Activated CD8-positive, alpha-beta T cell treated with anti-CD3 and anti-CD28 coated beads, Interleukin-2, amount 10 ng/mL, durations not matched to agents 7 days and 5 days (primary cell): ENCODE measurements at regions of chr5 and their contacts with region 1.

Region 1: GRCh38 chr5:54492178-54492577 is 25.4 kb upstream of the SNX18 start:
- DNase-seq: no peak
- ATAC-seq: no peak
- H3K4me3 Mint-ChIP-seq: no peak overlapping the region
- H3K27ac Mint-ChIP-seq: no peak overlapping the region
- H3K4me1 Mint-ChIP-seq: no peaks in the 10 kb centered on the region
- H3K27me3 Mint-ChIP-seq: peaks cover 13% of the 10 kb centered on the region

Region 2: DNA sequence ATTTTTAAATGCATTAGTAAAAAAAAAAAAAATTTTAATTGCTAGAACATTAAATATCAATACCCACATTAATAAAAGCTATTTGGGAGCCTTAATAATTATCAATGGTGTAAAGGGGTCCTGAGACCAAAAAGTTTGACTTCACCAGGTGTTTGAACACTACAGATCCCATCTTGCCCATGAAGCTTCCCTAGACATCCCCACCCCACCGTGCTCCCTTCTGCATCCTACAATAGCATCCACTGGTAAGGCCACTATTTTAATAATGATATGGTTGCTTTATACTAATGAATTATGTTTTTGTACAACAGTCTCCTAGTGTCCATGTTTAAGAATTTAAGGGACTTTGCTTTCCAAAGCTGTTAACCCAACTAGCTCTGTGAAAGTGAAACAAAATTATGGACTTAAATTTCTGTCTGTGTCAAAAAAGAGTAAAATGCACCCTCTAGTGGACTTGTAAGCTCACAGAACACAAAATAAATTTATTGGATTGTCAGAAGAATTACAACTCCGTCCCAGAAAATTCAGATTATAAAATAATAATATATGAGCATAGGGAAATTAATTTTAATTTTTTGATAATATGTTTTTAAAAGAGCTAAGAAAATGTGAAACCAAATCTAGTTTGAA is 257.8 kb before region 1 on chr5:
- CTCF ChIA-PET with region 1: interaction called, 12 read pairs
- POLR2A ChIA-PET with region 1: no interaction called
- DNase-seq: no peak
- ATAC-seq: no peak
- H3K4me3 Mint-ChIP-seq: peak overlapping the region; percentile 32
- H3K27ac Mint-ChIP-seq: no peak overlapping the region
- H3K4me1 Mint-ChIP-seq: peaks cover 3% of the 10 kb centered on the region
- H3K27me3 Mint-ChIP-seq: no peaks in the 10 kb centered on the region

Region 3: DNA sequence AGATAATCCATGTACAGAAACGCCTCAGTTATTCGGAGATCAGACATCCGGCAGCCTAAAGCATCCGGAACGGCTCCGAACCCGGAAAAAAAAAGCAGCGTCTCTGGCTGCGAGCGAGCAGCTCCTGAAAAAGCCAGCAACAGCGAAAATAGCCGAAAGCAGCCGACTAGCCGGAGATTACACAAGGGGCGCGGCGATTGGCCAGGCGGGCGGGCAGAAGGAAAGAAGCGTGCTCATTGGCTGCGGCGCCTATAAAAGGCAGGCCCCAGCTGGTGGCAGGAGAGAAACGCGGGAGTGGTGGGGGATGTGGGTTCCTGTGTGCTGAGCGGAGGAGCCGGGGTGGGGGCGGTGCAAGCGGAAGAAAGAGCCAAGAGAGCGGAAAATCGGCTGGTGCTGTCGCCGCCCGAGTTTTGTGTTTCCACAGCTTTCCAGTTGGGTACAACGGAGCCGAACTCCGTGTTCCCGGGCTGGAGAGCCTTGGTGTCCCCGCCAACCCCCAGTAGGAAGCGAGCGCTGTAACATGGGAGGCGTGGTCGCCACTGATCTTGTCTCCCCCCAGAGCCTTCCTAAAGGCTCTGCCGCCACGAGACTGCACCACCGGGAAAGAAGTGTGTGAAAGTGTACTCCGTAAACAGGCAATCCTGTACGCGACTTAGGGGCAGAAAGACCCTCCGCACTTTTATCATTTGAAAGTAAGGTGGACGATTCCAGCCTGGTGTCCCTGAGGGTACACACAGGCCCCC is 181.6 kb before region 1 on chr5 and contains the start of gene ARL15:
- CTCF ChIA-PET with region 1: interaction called, 25 read pairs
- POLR2A ChIA-PET with region 1: no interaction called
- DNase-seq: peak; percentile 99
- ATAC-seq: peak; percentile 94
- H3K4me3 Mint-ChIP-seq: peak within 1 kb of the TSS; percentile 91
- H3K27ac Mint-ChIP-seq: peak within 1 kb of the TSS; percentile 92
- H3K4me1 Mint-ChIP-seq: peaks cover 20% of the 10 kb centered on the region
- H3K27me3 Mint-ChIP-seq: peaks cover 19% of the 10 kb centered on the region
- total RNA-seq, gene ARL15: 10.6 to 12.3 TPM

Region 4: DNA sequence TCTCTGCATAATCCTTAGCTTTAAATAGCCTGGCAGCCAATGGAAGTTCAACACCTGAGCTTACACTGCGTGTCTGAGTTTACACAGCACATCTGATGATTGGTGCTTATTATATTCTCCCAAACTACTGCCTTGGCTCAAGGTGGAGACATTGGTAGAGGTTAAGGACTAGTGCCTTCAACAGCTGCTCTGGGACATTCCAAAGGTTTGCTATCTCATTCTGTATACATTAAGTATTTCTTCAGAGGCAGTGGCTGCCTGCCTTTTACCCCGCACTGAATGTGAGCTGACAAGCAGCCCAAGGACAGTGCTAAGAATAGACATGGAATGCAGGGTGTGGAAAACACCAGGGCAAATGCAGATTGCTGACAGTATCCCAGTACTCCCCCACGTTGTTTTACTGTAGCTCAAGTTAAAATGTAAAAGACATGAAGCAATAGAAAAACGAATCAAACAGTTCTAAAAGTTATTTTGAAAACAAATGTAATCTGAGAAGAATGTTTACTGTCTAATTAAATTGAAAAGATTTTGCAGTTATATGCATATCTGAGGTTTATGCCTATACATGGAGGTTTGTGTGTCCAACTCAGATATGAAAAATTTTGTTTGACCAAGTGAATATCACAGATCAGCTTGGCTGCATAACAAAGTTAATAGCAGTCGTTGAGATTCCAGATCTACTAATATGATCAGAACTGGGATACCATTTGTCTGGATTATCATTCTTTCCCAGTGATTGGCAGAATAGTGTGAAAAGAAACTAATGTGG is 34.9 kb before region 1 on chr5:
- CTCF ChIA-PET with region 1: interaction called, 12 read pairs
- POLR2A ChIA-PET with region 1: no interaction called
- DNase-seq: no peak
- ATAC-seq: no peak
- H3K4me3 Mint-ChIP-seq: no peak overlapping the region
- H3K27ac Mint-ChIP-seq: no peak overlapping the region
- H3K4me1 Mint-ChIP-seq: no peaks in the 10 kb centered on the region
- H3K27me3 Mint-ChIP-seq: peaks cover 17% of the 10 kb centered on the region

Region 5: DNA sequence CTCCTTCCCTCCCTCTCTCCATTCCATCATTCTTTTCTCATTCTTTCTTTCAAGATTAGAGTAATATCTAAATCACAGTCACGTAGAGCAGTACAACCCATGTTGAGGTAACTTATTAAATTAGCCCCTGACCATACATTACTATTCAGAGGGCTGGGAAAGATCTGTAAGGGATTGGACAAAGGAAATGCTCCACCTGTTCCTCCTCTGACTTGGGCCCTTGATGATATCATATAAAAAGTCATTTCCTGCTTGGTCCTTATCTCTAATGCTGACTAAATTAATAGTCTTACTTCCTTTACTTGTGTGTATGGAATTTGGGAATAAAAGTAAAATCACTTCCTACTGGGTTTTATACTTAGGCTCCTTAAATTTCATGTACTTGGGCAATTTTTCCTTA is 66.2 kb after region 1 on chr5:
- CTCF ChIA-PET with region 1: no interaction called
- POLR2A ChIA-PET with region 1: no interaction called
- DNase-seq: no peak
- ATAC-seq: no peak
- H3K4me3 Mint-ChIP-seq: no peak overlapping the region
- H3K27ac Mint-ChIP-seq: no peak overlapping the region
- H3K4me1 Mint-ChIP-seq: no peaks in the 10 kb centered on the region
- H3K27me3 Mint-ChIP-seq: no peaks in the 10 kb centered on the region